Left ventricle myocardium inferior (tissue), 1 donor: ENCODE measurements at regions of chr12 and their contacts with region 1.

Region 1: GRCh38 chr12:53701518-53702260 is 25.6 kb downstream of the CALCOCO1 start:
- DNase-seq: peak; percentile 80
- H3K4me3 ChIP-seq: no peak overlapping the region
- H3K27ac ChIP-seq: no peak overlapping the region
- H3K4me1 ChIP-seq: peaks cover 3% of the 10 kb centered on the region
- H3K27me3 ChIP-seq: peaks cover 82% of the 10 kb centered on the region
- CTCF ChIP-seq: peak; percentile 92

Region 2: DNA sequence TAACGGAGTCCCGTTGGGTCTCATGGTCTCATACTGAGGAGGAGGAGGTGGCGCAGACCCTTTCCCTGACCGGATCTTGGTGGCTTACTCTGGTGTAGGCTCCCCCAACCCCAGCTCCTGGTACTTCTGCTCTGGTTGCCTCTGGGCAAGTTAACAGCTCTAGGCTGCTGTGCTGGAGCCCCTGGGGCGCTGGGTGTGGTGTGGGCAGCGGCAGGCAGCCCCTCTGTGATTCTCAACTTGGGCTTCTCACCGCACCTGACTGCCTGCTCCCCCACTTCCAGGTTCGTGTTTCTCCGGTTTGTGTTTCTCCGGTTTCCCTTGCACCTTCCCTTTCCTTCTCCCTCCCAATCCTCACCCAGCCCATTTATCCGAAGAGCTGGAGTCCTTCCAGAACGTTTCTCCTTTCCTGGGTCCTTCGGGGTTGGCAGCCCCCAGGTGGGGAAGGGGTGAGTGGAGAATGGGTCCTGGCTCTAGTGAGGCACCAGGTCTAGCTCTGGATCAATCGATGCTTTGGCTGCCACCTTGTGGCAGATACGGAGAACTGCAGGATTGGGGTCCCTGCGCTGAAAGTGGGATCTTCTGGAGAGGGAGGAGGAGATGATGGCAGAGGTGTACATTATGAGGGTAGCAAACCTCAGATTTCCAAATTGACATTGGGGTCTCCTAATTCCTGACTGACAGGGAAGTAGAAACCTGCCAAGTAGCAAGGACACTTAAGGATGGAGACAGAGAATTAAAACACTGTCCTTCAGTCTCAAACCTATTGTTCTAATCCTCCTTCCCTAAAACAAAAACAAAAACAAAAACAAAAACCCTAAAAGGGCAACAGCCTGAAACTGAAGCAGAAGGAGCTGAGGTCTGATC is 41.8 kb after region 1 on chr12:
- intact Hi-C with region 1: loop called (anchors 2 kb)
- DNase-seq: no peak
- H3K4me3 ChIP-seq: no peak overlapping the region
- H3K27ac ChIP-seq: no peak overlapping the region
- H3K4me1 ChIP-seq: peaks cover 29% of the 10 kb centered on the region
- H3K27me3 ChIP-seq: peaks cover 79% of the 10 kb centered on the region
- CTCF ChIP-seq: peak; percentile 96

Region 3: GRCh38 chr12:53770281-53770680 is 68.6 kb after region 1 on chr12:
- intact Hi-C with region 1: no loop called
- DNase-seq: no peak
- H3K4me3 ChIP-seq: no peak overlapping the region
- H3K27ac ChIP-seq: no peak overlapping the region
- H3K4me1 ChIP-seq: no peaks in the 10 kb centered on the region
- H3K27me3 ChIP-seq: peaks cover 84% of the 10 kb centered on the region
- CTCF ChIP-seq: no peak